GM12878 (cell line): ENCODE measurements at regions of chr12 and their contacts with region 1.

Region 1: DNA sequence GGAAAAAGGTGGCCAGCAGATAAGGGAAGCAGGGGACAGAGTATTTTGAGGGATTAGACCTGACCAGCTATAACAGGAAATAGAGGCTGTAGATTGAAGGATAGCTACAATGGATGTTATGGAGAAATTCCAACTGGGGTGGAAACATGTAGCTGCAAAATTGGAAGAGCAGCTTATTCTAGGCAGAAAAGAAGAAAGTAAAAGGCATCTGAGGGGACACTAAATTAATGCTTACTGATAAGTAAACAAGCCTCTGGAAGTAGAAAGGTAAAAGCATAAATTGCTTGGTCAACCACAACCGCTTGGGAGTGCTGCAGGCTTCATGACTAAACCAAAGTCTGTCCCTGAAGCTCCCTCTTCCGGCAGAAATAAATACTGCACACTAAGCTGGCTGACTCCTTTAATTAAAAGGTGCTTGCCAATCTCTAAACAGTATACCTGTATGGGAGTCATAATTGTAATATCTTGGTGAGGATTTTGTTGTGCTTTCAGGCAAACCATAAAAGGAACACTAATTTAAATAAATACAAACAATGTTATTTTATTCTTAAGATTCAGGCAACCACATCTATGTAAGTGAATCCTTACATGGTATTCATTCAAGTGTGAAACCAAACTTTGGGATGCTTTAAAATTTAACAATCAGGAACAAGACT is 7.7 kb downstream of the UBC start:
- DNase-seq: peak; percentile 87
- ATAC-seq: peak; percentile 59
- H3K4me3 ChIP-seq: no peak overlapping the region
- H3K27ac ChIP-seq: peak overlapping the region; percentile 47
- H3K4me1 ChIP-seq: peaks cover 34% of the 10 kb centered on the region
- H3K27me3 ChIP-seq: no peaks in the 10 kb centered on the region
- CTCF ChIP-seq: peak; percentile 91 to 100 (median 99); a peak in 5 of 6 replicates
- EP300 ChIP-seq: no peak
- POLR2A ChIP-seq: no peak
- RAD21 ChIP-seq: peak; percentile 98

Region 2: GRCh38 chr12:123436017-123436964 is 1470.4 kb before region 1 on chr12 and contains the start of gene RILPL2:
- CTCF ChIA-PET with region 1: no interaction called
- POLR2A ChIA-PET with region 1: no interaction called
- RAD21 ChIA-PET with region 1: no interaction called
- SMC1A ChIA-PET with region 1: no interaction called
- in situ Hi-C with region 1: loop called (anchors 25 kb)
- intact Hi-C with region 1: no loop called
- DNase-seq: peak; percentile 86
- ATAC-seq: peak; percentile 84
- H3K4me3 ChIP-seq: peak within 1 kb of the TSS; percentile 82
- H3K27ac ChIP-seq: peak within 1 kb of the TSS; percentile 95
- H3K4me1 ChIP-seq: peaks cover 2% of the 10 kb centered on the region; the same call in 1 of the 2 replicates
- H3K27me3 ChIP-seq: no peaks in the 10 kb centered on the region
- CTCF ChIP-seq: no peak
- EP300 ChIP-seq: no peak; a peak in 1 of 4 replicates
- POLR2A ChIP-seq: peak; percentile 81
- RAD21 ChIP-seq: no peak; the same call in 1 of the 2 replicates
- polyA plus RNA-seq, gene RILPL2: 3.5 to 8.3 TPM

Region 3: DNA sequence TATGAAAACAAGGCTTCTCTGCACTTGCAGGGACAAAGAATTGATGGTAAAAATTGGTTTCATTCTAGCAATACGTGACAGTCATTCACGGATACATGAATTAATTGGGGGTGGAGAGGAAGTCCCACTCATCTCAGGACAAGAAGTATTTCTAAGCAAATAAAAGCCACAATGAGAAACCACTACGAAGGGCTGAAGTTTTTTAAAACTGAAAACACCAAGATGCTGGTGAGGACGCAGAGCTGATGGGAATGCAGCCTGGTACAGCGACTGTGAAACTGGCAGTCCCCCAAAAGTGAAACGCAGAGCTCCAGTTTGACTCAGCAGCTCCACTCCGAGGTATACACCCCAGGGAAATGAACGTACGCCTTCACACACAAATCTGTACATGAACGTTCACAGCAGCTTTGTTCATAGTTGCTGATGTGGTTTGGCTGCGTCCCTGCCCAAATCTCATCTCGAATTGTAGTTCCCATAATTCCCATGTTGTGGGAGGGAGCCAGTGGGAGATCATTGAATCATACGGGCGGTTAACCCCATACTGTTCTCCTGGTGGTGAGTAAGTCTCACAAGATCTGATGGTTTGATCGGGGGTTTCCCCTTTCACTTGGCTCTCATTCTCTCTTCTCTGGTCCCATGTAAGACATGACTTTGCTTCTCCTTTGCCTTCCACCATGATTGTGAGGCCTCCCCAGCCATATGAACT is 132.1 kb before region 1 on chr12:
- CTCF ChIA-PET with region 1: interaction called, 61 read pairs
- POLR2A ChIA-PET with region 1: interaction called, 9 read pairs
- RAD21 ChIA-PET with region 1: interaction called, 40 read pairs
- SMC1A ChIA-PET with region 1: interaction called, 31 read pairs
- in situ Hi-C with region 1: no loop called
- intact Hi-C with region 1: loop called (anchors 2 kb)
- DNase-seq: peak; percentile 100
- ATAC-seq: peak; percentile 79
- H3K4me3 ChIP-seq: peak overlapping the region; percentile 34; the same call in 1 of the 2 replicates
- H3K27ac ChIP-seq: peak overlapping the region; percentile 98
- H3K4me1 ChIP-seq: peaks cover 70% of the 10 kb centered on the region
- H3K27me3 ChIP-seq: no peaks in the 10 kb centered on the region
- CTCF ChIP-seq: 0 out of 6 replicates have a peak, but pooled peaks of 1 of the 3 experiments have one; percentile 2
- EP300 ChIP-seq: peak; percentile 91 to 94
- POLR2A ChIP-seq: peak; percentile 41; the same call in 1 of the 2 replicates
- RAD21 ChIP-seq: peak; percentile 22

Region 4: DNA sequence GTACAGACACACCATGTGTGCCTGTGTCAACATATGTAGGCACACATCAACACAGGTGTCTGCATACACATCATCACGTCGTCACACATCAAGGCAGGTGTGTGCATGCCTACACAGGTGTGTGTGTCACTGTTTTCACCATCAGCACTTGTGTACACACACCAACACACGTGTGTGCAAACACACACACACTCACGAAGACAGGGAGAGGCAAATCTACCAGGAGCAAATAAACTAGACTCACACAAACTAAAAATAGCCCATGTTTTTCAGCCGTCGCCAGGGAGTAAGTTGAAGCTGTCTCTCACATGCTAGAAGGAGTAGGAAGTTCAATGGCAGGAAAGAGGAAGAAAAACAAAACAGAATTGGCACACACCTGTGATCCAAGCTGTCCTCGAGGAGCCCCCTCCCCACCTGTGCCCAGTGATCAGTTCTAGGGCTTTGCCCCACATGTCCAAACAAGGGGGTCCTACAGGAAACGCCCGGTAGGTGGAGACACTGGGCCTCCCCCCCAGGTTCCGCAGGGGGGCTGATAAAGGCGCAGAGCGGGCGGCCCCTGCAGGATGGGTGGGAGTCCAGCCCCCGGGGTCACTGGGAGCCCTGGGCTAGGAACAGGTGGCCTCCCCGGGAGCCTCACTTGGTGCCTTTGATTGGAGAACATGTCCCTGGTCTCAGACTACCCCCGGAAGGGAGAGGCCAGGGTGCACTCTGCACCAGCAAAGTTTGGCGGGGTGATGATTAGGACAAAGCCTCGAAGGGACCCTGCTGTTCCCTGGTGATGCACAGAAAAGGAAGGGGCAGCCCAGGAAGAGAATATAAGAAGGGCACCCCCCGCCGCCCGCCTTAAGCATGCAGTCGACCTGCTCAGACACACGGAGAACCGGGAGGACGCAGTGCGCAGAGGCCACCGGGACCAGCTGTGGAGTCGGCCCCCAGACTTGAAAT is 50.2 kb before region 1 on chr12:
- CTCF ChIA-PET with region 1: interaction called, 48 read pairs
- POLR2A ChIA-PET with region 1: interaction called, 15 read pairs
- RAD21 ChIA-PET with region 1: interaction called, 46 read pairs
- SMC1A ChIA-PET with region 1: interaction called, 21 read pairs
- in situ Hi-C with region 1: no loop called
- intact Hi-C with region 1: no loop called
- DNase-seq: no peak
- ATAC-seq: peak; percentile 18
- H3K4me3 ChIP-seq: peak overlapping the region; percentile 6; the same call in 1 of the 2 replicates
- H3K27ac ChIP-seq: no peak overlapping the region
- H3K4me1 ChIP-seq: peaks cover 10% of the 10 kb centered on the region
- H3K27me3 ChIP-seq: no peaks in the 10 kb centered on the region
- CTCF ChIP-seq: peak; percentile 23 to 48 (median 25); a peak in 5 of 6 replicates
- EP300 ChIP-seq: no peak
- POLR2A ChIP-seq: peak; percentile 56
- RAD21 ChIP-seq: 0 out of 2 replicates have a peak, but pooled peaks have one; percentile 10

Region 5: GRCh38 chr12:124884587-124885438 is 21.9 kb before region 1 on chr12:
- CTCF ChIA-PET with region 1: interaction called, 18 read pairs
- POLR2A ChIA-PET with region 1: interaction called, 4 read pairs
- RAD21 ChIA-PET with region 1: interaction called, 11 read pairs
- SMC1A ChIA-PET with region 1: interaction called, 10 read pairs
- in situ Hi-C with region 1: no loop called
- intact Hi-C with region 1: no loop called
- DNase-seq: no peak
- ATAC-seq: peak; percentile 95
- H3K4me3 ChIP-seq: no peak overlapping the region; the same call in 1 of the 2 replicates
- H3K27ac ChIP-seq: peak overlapping the region; percentile 74
- H3K4me1 ChIP-seq: peaks cover 18% of the 10 kb centered on the region
- H3K27me3 ChIP-seq: no peaks in the 10 kb centered on the region
- CTCF ChIP-seq: peak; percentile 8 to 22 (median 9); a peak in 2 of 6 replicates
- EP300 ChIP-seq: no peak
- POLR2A ChIP-seq: 0 out of 2 replicates have a peak, but pooled peaks have one; percentile 18
- RAD21 ChIP-seq: peak; percentile 21; the same call in 1 of the 2 replicates

Region 6: DNA sequence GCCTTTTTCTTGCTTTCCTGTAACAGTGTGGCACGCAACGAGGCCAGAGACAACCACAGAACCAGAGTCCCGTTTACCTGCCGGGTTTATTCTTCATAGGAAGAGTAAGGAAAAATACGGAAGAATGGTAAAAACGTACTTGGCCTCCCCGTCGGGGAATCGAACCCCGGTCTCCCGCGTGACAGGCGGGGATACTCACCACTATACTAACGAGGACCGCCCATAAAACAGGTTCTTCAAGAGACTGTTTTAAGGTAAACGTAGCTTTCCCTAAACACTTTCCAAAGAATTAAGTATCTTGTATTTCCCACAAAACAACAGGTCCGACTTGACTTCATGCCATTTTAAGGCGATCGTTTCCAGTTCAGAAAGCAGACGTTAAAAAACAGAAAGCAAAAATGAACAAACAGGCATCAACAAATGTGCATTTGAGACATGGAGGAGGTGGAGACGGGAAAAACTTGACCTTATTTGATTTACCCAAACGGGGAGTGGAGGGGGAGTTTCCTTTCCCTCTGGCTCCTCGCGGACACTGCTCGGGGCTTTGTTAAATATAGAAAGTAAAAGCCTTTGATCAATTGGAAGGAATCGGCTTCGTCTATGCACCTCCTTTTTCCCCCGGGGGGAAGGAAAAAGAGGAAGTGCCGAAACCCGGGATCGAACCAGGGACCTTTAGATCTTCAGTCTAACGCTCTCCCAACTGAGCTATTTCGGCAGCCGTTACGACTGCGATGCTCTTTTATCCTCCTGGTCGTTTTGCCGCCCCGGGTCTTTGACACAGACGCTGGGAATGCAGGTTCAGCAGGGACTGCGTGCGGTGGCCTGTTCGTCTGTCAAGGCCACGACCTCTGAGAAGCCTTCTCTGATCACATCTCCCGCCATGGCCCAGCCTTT is 20.7 kb after region 1 on chr12:
- CTCF ChIA-PET with region 1: interaction called, 160 read pairs
- POLR2A ChIA-PET with region 1: interaction called, 7 read pairs
- RAD21 ChIA-PET with region 1: interaction called, 104 read pairs
- SMC1A ChIA-PET with region 1: interaction called, 143 read pairs
- in situ Hi-C with region 1: no loop called
- intact Hi-C with region 1: no loop called
- DNase-seq: peak; percentile 90
- ATAC-seq: peak; percentile 85
- H3K4me3 ChIP-seq: peak overlapping the region; percentile 80
- H3K27ac ChIP-seq: peak overlapping the region; percentile 90
- H3K4me1 ChIP-seq: peaks cover 11% of the 10 kb centered on the region
- H3K27me3 ChIP-seq: no peaks in the 10 kb centered on the region
- CTCF ChIP-seq: no peak
- EP300 ChIP-seq: peak in 1 of 2 experiments; percentile 68; a peak in 1 of 4 replicates
- POLR2A ChIP-seq: no peak
- RAD21 ChIP-seq: no peak

Region 7: GRCh38 chr12:125049093-125049458 is 142.3 kb after region 1 on chr12:
- CTCF ChIA-PET with region 1: no interaction called
- POLR2A ChIA-PET with region 1: no interaction called
- RAD21 ChIA-PET with region 1: no interaction called
- SMC1A ChIA-PET with region 1: no interaction called
- in situ Hi-C with region 1: no loop called
- intact Hi-C with region 1: no loop called
- DNase-seq: no peak
- ATAC-seq: no peak; the same call in 2 of the 3 replicates
- H3K4me3 ChIP-seq: peak overlapping the region; percentile 41; the same call in 1 of the 2 replicates
- H3K27ac ChIP-seq: no peak overlapping the region
- H3K4me1 ChIP-seq: no peaks in the 10 kb centered on the region
- H3K27me3 ChIP-seq: no peaks in the 10 kb centered on the region
- CTCF ChIP-seq: no peak
- EP300 ChIP-seq: no peak
- POLR2A ChIP-seq: no peak
- RAD21 ChIP-seq: no peak